Common myeloid progenitor, CD34-positive (primary cell): ENCODE measurements at regions of chr4 and their contacts with region 1.

Region 1: GRCh38 chr4:56940971-56941370 is 33.3 kb downstream of the REST start:
- DNase-seq: no peak
- H3K4me3 ChIP-seq: no peak overlapping the region
- H3K27ac ChIP-seq: no peak overlapping the region
- H3K4me1 ChIP-seq: no peaks in the 10 kb centered on the region
- H3K27me3 ChIP-seq: no peaks in the 10 kb centered on the region

Region 2: DNA sequence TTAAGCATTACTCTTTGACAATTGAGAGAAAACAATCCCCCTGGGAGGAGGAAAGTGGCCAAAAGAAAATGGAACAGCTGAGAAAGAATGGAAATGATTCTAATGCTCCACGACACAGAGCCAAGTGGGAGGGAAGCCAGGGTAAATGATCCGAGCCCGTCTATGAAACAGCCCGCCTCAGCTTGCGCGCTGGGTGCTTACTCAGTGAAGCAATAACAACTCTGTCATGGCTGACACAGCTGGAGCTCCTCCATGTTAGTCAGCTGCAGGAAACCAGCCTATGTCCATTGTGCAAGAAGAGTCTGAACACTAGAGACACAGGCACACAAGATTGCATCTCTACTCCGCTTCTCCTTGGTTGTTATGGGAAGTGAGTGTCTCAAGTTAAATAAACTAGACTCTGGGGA is 17.1 kb after region 1 on chr4:
- CTCF ChIA-PET with region 1: interaction called, 11 read pairs
- POLR2A ChIA-PET with region 1: no interaction called
- DNase-seq: peak in 2 of 3 donors; percentile 34 to 46
- H3K4me3 ChIP-seq: no peak overlapping the region
- H3K27ac ChIP-seq: no peak overlapping the region
- H3K4me1 ChIP-seq: no peaks in the 10 kb centered on the region
- H3K27me3 ChIP-seq: no peaks in the 10 kb centered on the region